ENCODE measurements at regions of chr19 and their contacts with region 1.

Region 1: GRCh38 chr19:48842789-48843162 is 6.5 kb upstream of the HSD17B14 start:
- DNase-seq: no peak
- ATAC-seq: peak; percentile 65

Region 2: DNA sequence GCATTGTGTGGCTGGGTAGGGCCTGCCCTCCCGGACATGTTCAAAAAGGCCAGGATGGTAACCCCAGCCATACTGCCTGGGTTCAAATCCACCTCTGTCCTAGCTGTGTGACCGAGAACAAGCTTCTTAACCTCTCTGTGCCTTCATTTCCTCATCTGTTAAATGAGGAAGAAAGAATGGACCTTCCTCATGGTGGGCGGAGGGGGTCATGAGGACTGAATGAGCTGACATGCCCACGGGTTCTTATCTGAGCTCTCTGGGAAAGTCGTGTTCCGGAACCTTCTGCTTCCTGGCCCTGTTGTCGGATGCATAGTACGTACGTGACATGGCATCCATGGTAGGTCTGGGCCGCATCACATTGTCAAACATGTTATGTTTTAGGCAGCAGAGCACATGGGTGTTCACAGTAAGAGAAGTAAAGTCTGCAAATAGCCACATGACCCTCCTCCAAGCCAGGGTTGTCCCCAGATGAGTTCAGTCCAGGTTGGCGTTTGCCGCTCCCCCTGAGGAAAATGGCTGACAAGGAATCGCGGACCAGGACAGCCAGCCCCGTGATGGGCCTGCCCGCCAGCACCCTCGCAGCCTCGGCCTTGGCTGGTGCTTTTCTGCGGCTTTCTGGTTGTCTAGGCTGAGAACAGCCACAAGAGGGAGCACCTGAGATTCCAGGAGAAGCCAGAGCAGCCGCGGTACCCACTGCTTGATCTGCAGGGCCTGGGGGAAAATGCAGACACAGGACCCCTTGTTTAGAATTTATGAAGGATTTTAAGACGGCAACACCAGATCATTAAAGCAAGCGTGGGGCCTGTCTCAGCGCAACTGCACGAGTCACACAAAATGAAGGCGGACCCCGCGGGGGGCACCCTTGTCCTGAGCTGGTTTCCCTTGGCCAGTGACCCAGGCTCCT is 167.6 kb before region 1 on chr19:
- intact Hi-C with region 1: loop called (anchors 10 kb)
- DNase-seq: peak; percentile 88
- ATAC-seq: peak; percentile 89

Region 3: GRCh38 chr19:48724796-48725753 is 117.7 kb before region 1 on chr19:
- intact Hi-C with region 1: no loop called
- DNase-seq: peak; percentile 80
- ATAC-seq: peak; percentile 30

Region 4: GRCh38 chr19:48858984-48859710 is 16.4 kb after region 1 on chr19:
- intact Hi-C with region 1: no loop called
- DNase-seq: no peak
- ATAC-seq: peak; percentile 73